ENCODE measurements at regions of chrX and their contacts with region 1.

Region 1: DNA sequence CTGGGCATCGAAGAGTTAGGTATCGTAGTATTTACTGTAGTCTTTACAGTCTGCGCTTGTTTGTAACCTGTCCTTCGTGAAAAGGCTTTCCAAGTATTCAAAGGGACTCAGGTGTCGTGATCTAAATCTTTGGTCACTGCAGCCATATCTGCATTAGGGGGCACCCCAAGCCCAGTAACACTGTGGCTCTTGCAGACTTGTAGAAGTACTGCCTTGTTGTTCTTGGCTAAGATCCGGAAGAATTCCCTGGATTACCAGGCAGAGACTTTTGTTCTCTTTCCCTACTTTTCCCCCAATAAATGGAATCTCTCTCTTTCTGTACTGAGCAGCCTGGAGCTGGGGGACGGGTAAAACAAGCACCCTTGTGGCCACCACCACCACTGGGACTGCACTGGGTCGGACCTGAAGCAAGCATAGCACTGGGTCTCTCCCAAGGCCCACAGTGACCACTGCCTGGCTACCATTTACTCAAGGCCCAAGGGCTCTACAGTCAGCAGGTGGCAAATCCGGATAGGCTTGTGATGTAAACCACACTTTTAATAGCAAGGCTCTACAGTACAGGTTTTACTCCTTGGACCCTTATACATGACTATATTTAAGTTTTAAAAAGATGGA is 12.0 kb downstream of the CXorf58 start:
- DNase-seq: no peak
- H3K4me3 ChIP-seq: no peak overlapping the region
- H3K27ac ChIP-seq: no peak overlapping the region
- H3K4me1 ChIP-seq: no peaks in the 10 kb centered on the region
- H3K27me3 ChIP-seq: no peaks in the 10 kb centered on the region
- CTCF ChIP-seq: no peak
- EP300 ChIP-seq: no peak
- POLR2A ChIP-seq: no peak

Region 2: GRCh38 chrX:24014388-24015018 is 94.7 kb after region 1 on chrX:
- in situ Hi-C with region 1: loop called in 1 of 4 experiments (anchors 10 kb)
- intact Hi-C with region 1: no loop called
- DNase-seq: no peak
- H3K4me3 ChIP-seq: no peak overlapping the region
- H3K27ac ChIP-seq: no peak overlapping the region
- H3K4me1 ChIP-seq: no peaks in the 10 kb centered on the region
- H3K27me3 ChIP-seq: no peaks in the 10 kb centered on the region
- CTCF ChIP-seq: no peak
- EP300 ChIP-seq: no peak
- POLR2A ChIP-seq: no peak

Measured in transverse colon (tissue), 4 donors.